Activated CD8-positive, alpha-beta memory T cell treated with anti-CD3 and anti-CD28 coated beads, Interleukin-2, amount 10 ng/mL, durations not matched to agents 7 days and 5 days (primary cell): ENCODE measurements at regions of chr10 and their contacts with region 1.

Region 1: GRCh38 chr10:72048450-72049124 is 39.8 kb downstream of the SPOCK2 start:
- DNase-seq: peak; percentile 93
- ATAC-seq: peak; percentile 98
- H3K4me3 Mint-ChIP-seq: no peak overlapping the region
- H3K27ac Mint-ChIP-seq: no peak overlapping the region
- H3K4me1 Mint-ChIP-seq: peaks cover 10% of the 10 kb centered on the region
- H3K27me3 Mint-ChIP-seq: no peaks in the 10 kb centered on the region

Region 2: GRCh38 chr10:71878327-71879034 is 170.1 kb before region 1 on chr10:
- CTCF ChIA-PET with region 1: no interaction called
- DNase-seq: peak; percentile 63
- ATAC-seq: peak; percentile 71
- H3K4me3 Mint-ChIP-seq: no peak overlapping the region
- H3K27ac Mint-ChIP-seq: no peak overlapping the region
- H3K4me1 Mint-ChIP-seq: peaks cover 20% of the 10 kb centered on the region
- H3K27me3 Mint-ChIP-seq: peaks cover 12% of the 10 kb centered on the region

Region 3: GRCh38 chr10:71957546-71958275 is 90.9 kb before region 1 on chr10:
- CTCF ChIA-PET with region 1: interaction called, 26 read pairs
- DNase-seq: no peak
- ATAC-seq: no peak
- H3K4me3 Mint-ChIP-seq: no peak overlapping the region
- H3K27ac Mint-ChIP-seq: no peak overlapping the region
- H3K4me1 Mint-ChIP-seq: no peaks in the 10 kb centered on the region
- H3K27me3 Mint-ChIP-seq: peaks cover 48% of the 10 kb centered on the region

Region 4: DNA sequence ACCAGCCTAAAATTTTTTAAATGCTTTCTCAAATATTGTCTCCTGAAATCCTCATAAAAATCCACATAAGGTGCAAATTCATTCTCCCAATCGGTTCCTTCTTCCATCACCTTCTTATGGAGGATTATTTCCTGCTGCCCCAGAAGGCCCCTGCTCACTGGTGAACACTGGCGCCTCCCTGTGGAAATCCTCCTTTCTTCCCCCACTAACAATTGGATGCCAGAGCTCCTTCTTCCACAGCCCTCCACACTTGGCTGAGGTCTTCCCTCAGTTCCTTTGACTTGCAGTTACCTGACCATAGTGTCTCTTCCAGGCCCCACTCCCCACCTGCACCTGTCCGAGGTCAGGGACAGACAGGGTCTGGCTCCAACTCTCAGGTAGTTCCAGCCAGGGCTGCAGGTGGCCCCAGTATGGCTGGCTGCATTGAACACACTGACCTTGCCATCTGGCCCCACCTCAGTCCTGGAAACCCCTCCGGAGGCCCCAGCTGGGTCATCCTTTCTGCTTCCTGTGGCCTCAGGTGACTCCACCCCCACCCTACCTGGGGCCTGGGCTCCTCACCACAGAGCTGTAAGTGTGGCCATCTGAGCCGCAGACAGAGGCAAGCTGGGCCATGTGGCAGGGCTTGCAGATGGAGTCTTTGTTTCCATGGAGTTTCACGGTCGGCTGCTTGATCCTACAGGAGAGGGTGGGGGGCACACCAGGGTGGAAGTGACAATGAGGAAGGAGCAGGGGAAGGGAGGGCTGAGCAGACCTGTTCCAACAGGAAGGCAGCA is 21.4 kb after region 1 on chr10:
- CTCF ChIA-PET with region 1: interaction called, 24 read pairs
- DNase-seq: no peak
- ATAC-seq: no peak
- H3K4me3 Mint-ChIP-seq: no peak overlapping the region
- H3K27ac Mint-ChIP-seq: no peak overlapping the region
- H3K4me1 Mint-ChIP-seq: peaks cover 16% of the 10 kb centered on the region
- H3K27me3 Mint-ChIP-seq: no peaks in the 10 kb centered on the region

Region 5: DNA sequence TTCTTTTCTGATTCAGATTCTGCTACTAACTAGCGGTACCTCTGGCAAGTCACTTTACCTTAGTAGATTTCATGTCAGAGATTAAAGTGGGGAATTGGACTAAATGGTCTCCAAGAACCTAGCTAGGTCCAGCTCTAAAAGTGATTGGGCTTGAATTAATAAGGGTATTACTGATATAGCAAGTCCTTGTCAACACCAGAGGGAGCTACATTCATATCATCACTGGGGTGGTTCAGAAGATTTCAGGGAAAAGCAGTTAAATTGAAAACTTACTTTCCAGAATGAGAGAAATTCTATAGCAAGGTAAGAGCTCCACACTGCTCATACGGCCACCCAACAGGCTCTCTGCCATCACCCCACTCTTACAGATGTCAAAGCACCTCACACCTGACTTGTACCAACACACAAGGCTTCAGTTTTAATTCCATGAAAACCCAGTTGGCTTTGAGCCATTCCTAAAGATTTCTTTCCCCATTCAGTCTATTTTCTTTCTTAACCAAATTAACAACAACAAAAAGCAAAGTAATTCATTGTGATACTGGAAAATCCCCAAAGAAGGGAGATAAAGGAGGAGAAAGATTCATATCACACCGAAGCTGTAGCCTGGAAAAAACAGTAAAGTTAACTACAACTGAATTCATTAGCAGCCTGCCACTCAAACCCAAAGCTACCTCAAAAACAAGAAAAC is 77.7 kb after region 1 on chr10:
- CTCF ChIA-PET with region 1: interaction called, 16 read pairs
- DNase-seq: no peak
- ATAC-seq: no peak
- H3K4me3 Mint-ChIP-seq: no peak overlapping the region
- H3K27ac Mint-ChIP-seq: no peak overlapping the region
- H3K4me1 Mint-ChIP-seq: peaks cover 20% of the 10 kb centered on the region
- H3K27me3 Mint-ChIP-seq: no peaks in the 10 kb centered on the region

Region 6: GRCh38 chr10:72337020-72337629 is 288.5 kb after region 1 on chr10:
- CTCF ChIA-PET with region 1: interaction called, 110 read pairs
- DNase-seq: peak; percentile 75
- ATAC-seq: no peak
- H3K4me3 Mint-ChIP-seq: no peak overlapping the region
- H3K27ac Mint-ChIP-seq: peak overlapping the region; percentile 22
- H3K4me1 Mint-ChIP-seq: peaks cover 67% of the 10 kb centered on the region
- H3K27me3 Mint-ChIP-seq: no peaks in the 10 kb centered on the region